Tibial artery (tissue), 4 donors: ENCODE measurements at regions of chr9 and their contacts with region 1.

Region 1: DNA sequence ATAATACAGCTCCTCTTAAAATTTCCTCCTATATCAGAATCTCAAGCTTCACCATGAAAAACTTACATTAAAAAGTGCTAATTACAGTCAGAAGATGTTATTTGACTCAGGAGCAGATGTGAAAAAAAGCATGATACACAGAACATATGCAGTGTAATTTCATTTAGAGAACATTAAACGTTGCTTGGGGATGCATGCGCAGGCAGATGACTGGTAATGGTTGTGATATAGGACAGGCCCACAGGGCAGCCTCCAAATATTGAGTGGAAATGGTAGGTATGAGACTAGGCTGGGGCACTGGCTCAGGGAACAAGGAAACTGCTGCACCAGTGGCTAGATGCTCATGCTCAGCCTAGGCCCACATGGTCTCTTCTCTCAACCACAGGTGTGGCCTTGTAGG is 69.7 kb downstream of the IARS1 start:
- DNase-seq: no peak
- H3K4me3 ChIP-seq: no peak overlapping the region
- H3K27ac ChIP-seq: no peak overlapping the region
- H3K4me1 ChIP-seq: no peaks in the 10 kb centered on the region
- H3K27me3 ChIP-seq: no peaks in the 10 kb centered on the region
- CTCF ChIP-seq: no peak

Region 2: DNA sequence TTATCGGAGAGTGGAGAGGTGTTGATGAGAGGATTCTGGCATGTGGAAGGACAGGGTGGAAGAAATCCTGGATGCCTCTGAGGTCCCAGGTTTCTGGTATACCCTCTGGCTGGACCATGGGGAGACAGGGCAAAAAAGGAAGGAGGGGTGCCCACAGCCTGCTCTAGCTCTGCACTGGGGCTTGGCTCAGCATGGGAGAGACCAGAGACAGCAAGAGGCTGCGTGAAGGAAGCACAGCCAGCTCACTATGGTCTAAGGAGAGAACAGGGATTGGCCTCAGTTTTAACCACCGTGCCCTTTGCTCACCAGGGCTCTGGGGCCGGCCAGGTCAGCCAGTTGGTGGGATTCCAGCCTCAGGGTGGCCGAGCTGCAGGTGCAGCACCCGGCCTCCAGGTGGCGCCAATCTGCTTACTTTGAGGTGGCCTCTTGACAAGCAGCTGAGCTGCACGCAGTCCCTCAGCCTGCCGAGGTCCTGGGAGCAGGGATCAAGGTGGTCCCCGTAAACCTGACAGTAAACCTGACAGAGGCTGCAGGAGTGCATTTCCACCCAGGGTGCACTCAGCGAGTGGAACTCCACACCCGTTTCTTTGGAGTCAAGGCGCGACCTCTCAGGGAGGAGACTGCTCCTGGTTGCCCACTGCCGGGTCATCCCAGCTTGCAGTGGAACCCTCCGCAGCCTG is 83.5 kb before region 1 on chr9:
- intact Hi-C with region 1: loop called (anchors 10 kb)
- DNase-seq: peak; percentile 77 to 83
- H3K4me3 ChIP-seq: peak overlapping the region; percentile 41 to 54
- H3K27ac ChIP-seq: no peak overlapping the region
- H3K4me1 ChIP-seq: peaks cover 0 to 23% (median 15%) of the 10 kb centered on the region in 4 donors
- H3K27me3 ChIP-seq: peaks cover 0 to 15% of the 10 kb centered on the region in 2 donors
- CTCF ChIP-seq: peak; percentile 77 to 89